A549 (cell line): ENCODE measurements at regions of chr16 and their contacts with region 1.

Region 1: DNA sequence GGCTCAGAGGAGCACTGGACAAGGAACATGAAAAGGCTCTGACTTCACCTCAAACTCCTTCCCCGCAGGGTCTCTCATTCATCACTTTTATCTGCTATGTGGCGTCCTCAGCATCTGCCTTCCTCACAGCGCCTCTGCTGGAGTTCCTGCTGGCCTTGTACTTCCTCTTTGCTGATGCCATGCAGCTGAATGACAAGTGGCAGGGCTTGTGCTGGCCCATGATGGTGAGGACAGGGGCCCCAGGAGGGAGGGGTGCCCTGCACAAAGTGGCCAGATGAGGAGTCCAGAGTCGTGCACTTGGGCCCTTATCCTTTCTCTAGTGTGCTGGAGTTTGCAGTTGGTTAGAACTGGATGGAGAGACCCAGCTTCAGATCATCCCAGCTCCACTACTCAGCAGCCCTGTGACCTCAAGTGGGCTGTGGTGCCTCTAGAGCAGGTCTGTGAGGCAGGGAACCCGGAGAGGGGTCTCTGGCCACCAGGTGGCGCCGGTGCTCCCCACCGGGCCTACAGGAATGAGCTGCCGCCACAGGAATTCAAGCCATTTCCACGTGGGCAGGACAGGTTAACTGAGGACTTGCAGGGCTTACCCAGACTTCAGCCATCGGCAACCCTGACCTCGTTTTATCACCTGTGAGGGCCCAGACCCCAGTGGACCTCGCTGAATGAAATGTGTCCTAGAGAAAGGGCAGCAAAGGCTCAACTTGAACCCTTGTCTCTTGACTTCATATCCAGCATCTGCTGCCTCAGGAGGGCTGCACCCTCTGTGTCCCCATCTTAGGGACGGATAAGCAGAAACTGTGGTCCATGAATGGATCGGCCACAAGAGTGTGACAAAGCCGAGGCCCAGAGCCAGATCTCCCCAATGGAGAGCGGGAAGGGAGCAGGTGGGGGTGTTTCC is 4.0 kb downstream of the CMTM3 start:
- DNase-seq: peak; percentile 85 to 94
- ATAC-seq: peak; percentile 56 to 76
- H3K4me3 ChIP-seq: no peak overlapping the region
- H3K27ac ChIP-seq: peak overlapping the region; percentile 19 to 86; a peak in 3 of 6 replicates
- H3K4me1 ChIP-seq: peaks cover 28% of the 10 kb centered on the region
- CTCF ChIP-seq: peak; percentile 90
- EP300 ChIP-seq: no peak
- POLR2A ChIP-seq: no peak
- RAD21 ChIP-seq: peak; percentile 67 to 70

Region 2: GRCh38 chr16:66552286-66553177 is 56.0 kb before region 1 on chr16 and contains the start of gene CKLF:
- CTCF ChIA-PET with region 1: interaction called, 8 read pairs
- POLR2A ChIA-PET with region 1: interaction called, 13 read pairs
- DNase-seq: peak; percentile 90 to 92
- ATAC-seq: peak; percentile 72 to 81
- H3K4me3 ChIP-seq: peak within 1 kb of the TSS; percentile 51
- H3K27ac ChIP-seq: peak within 1 kb of the TSS; percentile 90 to 91
- H3K4me1 ChIP-seq: peaks cover 40% of the 10 kb centered on the region
- CTCF ChIP-seq: no peak
- EP300 ChIP-seq: no peak
- POLR2A ChIP-seq: peak; percentile 80
- RAD21 ChIP-seq: no peak
- polyA plus RNA-seq, gene CKLF: 85.1 and 96.5 TPM in 2 replicates

Region 3: DNA sequence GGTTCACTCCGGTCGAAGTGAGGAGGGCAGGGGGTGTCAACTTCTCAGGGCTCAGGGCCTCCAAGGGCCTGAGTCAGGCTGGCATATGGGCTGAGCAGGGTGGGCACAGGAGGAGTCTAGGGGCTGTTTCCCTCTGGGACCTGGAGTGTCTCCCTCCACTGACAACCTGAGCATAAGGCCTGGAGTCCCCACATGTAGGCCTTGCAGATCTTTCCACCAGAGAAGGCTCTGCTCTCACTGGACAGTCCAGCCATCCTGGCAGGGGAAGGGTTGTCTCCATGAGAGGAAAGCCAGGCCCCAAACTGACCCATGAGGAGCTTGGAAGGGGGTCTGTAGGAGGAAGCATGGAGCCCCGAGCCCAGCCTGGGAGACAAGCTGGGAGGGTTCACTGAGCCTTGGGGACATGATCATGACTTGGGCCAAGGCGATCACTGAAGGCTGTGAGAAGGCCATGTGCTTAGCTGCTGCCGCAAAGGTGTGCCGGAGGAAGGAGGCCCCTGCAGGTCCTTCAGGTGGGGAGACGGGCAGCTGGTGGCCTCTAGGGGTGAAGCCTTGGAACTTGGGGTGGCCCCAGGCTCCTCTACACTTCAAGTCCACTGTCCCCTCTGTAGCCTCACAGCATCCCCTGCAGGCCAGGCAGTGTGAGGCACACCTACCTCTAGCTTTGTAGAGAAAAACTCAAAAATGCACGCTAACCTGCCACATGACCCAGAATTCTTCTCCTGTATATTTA is 19.3 kb before region 1 on chr16:
- CTCF ChIA-PET with region 1: interaction called, 11 read pairs
- POLR2A ChIA-PET with region 1: no interaction called
- DNase-seq: peak; percentile 42 to 68
- ATAC-seq: peak; percentile 89 to 95; a peak in 5 of 6 replicates
- H3K4me3 ChIP-seq: no peak overlapping the region
- H3K27ac ChIP-seq: 0 out of 6 replicates have a peak overlapping the region, but pooled peaks of 1 of the 2 experiments have one; percentile 35
- H3K4me1 ChIP-seq: no peaks in the 10 kb centered on the region
- CTCF ChIP-seq: peak; percentile 49
- EP300 ChIP-seq: no peak
- POLR2A ChIP-seq: no peak
- RAD21 ChIP-seq: peak; percentile 65 to 82

Region 4: GRCh38 chr16:66618588-66619375 is 10.3 kb after region 1 on chr16:
- CTCF ChIA-PET with region 1: interaction called, 20 read pairs
- POLR2A ChIA-PET with region 1: no interaction called
- DNase-seq: peak in 1 of 2 experiments; percentile 26
- ATAC-seq: peak; percentile 32 to 59; a peak in 4 of 6 replicates
- H3K4me3 ChIP-seq: no peak overlapping the region
- H3K27ac ChIP-seq: peak overlapping the region; percentile 37 to 69; a peak in 4 of 6 replicates
- H3K4me1 ChIP-seq: peaks cover 24% of the 10 kb centered on the region
- CTCF ChIP-seq: no peak
- EP300 ChIP-seq: no peak
- POLR2A ChIP-seq: no peak
- RAD21 ChIP-seq: no peak

Region 5: GRCh38 chr16:66660422-66661209 is 52.1 kb after region 1 on chr16:
- CTCF ChIA-PET with region 1: interaction called, 53 read pairs
- POLR2A ChIA-PET with region 1: interaction called, 4 read pairs
- DNase-seq: peak; percentile 72 to 84
- ATAC-seq: peak; percentile 96 to 97
- H3K4me3 ChIP-seq: peak overlapping the region; percentile 5; the same call in 1 of the 3 replicates
- H3K27ac ChIP-seq: peak overlapping the region; percentile 72 to 86
- H3K4me1 ChIP-seq: peaks cover 30% of the 10 kb centered on the region
- CTCF ChIP-seq: no peak
- EP300 ChIP-seq: no peak
- POLR2A ChIP-seq: no peak
- RAD21 ChIP-seq: 0 out of 5 replicates have a peak, but pooled peaks of 1 of the 2 experiments have one; percentile 24

Region 6: DNA sequence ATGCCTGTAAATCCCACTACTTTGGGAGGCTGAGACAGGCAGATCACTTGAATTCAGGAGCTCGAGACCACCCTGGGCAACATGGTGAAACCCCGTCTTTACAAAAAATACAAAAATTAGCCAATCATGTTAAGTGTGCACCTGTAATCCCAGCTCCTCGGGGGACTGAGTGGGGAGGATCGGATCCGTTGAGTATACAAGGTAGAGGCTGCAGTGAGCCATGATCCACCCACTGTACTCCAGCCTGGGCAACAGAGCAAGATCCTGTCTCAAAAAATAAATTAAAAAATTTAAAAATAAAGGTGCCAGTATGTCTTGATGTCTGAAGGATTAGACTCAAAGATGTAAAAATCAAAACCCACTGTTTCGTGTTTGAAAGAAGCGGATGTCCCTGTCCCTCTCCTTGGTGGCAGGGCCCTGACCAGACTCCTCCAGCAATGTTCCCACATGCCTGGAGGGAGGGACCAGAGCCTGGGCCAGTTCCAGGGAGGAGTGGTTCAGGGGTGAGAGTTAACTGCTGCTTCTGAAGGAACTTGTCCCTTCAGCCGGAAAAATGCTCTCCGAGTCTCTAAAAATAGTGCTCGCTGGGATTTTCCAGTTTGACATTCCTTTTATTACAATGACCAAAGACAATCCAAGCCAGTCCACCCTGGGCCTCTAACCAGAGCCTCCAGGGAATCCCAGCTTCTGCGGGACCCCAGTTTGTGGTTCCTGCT is 97.5 kb after region 1 on chr16:
- CTCF ChIA-PET with region 1: no interaction called
- POLR2A ChIA-PET with region 1: no interaction called
- DNase-seq: no peak
- ATAC-seq: no peak
- H3K4me3 ChIP-seq: no peak overlapping the region
- H3K27ac ChIP-seq: no peak overlapping the region
- H3K4me1 ChIP-seq: no peaks in the 10 kb centered on the region
- CTCF ChIP-seq: no peak
- EP300 ChIP-seq: no peak
- POLR2A ChIP-seq: no peak
- RAD21 ChIP-seq: no peak

Region 7: DNA sequence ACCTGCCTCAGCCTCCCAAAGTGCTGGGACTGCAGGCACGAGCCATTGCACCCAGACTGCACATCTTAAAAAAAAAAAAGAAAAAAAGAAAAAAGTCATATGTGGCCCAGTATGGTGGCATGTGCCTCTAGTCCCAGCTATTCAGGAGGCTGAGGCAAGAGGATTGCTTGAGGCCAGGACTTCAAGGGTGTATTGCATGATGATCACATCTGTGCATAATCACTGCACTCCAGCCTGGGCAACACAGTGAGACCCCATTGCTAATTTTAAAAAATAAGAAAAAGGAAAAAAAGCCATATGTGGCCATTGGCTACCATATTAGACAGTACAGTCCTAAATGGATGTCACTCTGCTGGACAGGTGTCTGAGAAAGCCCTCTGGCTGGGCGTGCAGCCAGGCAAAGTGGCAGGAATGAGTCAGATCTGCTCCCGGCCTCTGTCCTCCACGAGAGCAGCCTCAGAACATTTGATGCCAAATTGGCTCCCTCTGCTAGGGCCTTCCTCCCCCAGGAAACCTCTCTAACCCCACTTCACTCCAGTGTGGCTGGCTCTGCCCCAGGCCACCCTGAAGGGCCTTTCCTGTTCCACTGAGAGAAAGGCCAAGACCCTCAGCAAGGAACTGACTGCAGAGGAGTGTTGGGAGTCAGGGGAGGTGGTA is 250.4 kb after region 1 on chr16:
- CTCF ChIA-PET with region 1: interaction called, 12 read pairs
- POLR2A ChIA-PET with region 1: no interaction called
- DNase-seq: peak in 1 of 2 experiments; percentile 47
- ATAC-seq: peak; percentile 70 to 78
- H3K4me3 ChIP-seq: no peak overlapping the region
- H3K27ac ChIP-seq: peak overlapping the region in 1 of 2 experiments; percentile 25; a peak in 1 of 6 replicates
- H3K4me1 ChIP-seq: peaks cover 9% of the 10 kb centered on the region; the same call in 1 of the 3 replicates
- CTCF ChIP-seq: no peak
- EP300 ChIP-seq: no peak
- POLR2A ChIP-seq: no peak
- RAD21 ChIP-seq: no peak